ENCODE measurements at regions of chr7 and their contacts with region 1.

Region 1: GRCh38 chr7:84139986-84140729 is 54.4 kb downstream of the SEMA3A start:
- DNase-seq: peak; percentile 79
- ATAC-seq: peak; percentile 76
- H3K4me3 ChIP-seq: no peak overlapping the region; a peak in 1 of 6 replicates
- H3K27ac ChIP-seq: peak overlapping the region; percentile 33
- H3K4me1 ChIP-seq: peaks cover 20% of the 10 kb centered on the region
- H3K27me3 ChIP-seq: no peaks in the 10 kb centered on the region
- CTCF ChIP-seq: no peak
- EP300 ChIP-seq: no peak
- POLR2A ChIP-seq: no peak
- RAD21 ChIP-seq: no peak

Region 2: DNA sequence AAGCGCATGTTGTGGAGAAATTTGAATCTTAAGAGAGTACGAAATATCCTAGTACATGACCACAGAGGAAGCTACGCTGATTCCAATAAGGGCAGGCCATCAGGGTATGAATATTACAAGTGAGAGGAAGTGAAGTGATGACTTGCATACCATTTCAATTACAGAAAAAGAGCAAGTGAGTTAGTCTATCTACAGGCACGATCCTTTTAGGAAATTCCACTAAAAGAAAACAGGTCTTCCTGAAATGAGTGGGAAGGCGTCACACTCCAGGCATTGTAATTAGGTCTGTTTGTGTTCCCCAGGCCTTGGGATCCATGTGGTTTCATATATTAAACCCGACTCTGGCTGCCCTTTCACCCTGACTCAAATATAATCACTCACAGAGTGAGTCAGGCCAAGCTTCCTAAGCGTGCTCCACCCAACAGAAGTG is 98.0 kb before region 1 on chr7:
- CTCF ChIA-PET with region 1: no interaction called
- POLR2A ChIA-PET with region 1: no interaction called
- in situ Hi-C with region 1: no loop called
- intact Hi-C with region 1: loop called (anchors 5 kb)
- DNase-seq: no peak
- ATAC-seq: no peak
- H3K4me3 ChIP-seq: no peak overlapping the region
- H3K27ac ChIP-seq: peak overlapping the region; percentile 80
- H3K4me1 ChIP-seq: peaks cover 77% of the 10 kb centered on the region
- H3K27me3 ChIP-seq: no peaks in the 10 kb centered on the region
- CTCF ChIP-seq: no peak
- EP300 ChIP-seq: no peak
- POLR2A ChIP-seq: no peak
- RAD21 ChIP-seq: no peak

Region 3: GRCh38 chr7:84092207-84092606 is 48.0 kb before region 1 on chr7:
- CTCF ChIA-PET with region 1: no interaction called
- POLR2A ChIA-PET with region 1: no interaction called
- in situ Hi-C with region 1: no loop called
- intact Hi-C with region 1: no loop called
- DNase-seq: no peak
- ATAC-seq: no peak
- H3K4me3 ChIP-seq: no peak overlapping the region
- H3K27ac ChIP-seq: no peak overlapping the region
- H3K4me1 ChIP-seq: peaks cover 27% of the 10 kb centered on the region
- H3K27me3 ChIP-seq: no peaks in the 10 kb centered on the region
- CTCF ChIP-seq: no peak
- EP300 ChIP-seq: no peak
- POLR2A ChIP-seq: no peak
- RAD21 ChIP-seq: no peak

Region 4: GRCh38 chr7:84204655-84205054 is 64.5 kb after region 1 on chr7:
- CTCF ChIA-PET with region 1: no interaction called
- POLR2A ChIA-PET with region 1: no interaction called
- in situ Hi-C with region 1: no loop called
- intact Hi-C with region 1: no loop called
- DNase-seq: no peak
- ATAC-seq: no peak
- H3K4me3 ChIP-seq: no peak overlapping the region
- H3K27ac ChIP-seq: no peak overlapping the region
- H3K4me1 ChIP-seq: no peaks in the 10 kb centered on the region
- H3K27me3 ChIP-seq: no peaks in the 10 kb centered on the region
- CTCF ChIP-seq: no peak
- EP300 ChIP-seq: no peak
- POLR2A ChIP-seq: no peak
- RAD21 ChIP-seq: no peak